PC-3 (cell line): ENCODE measurements at regions of chr13 and their contacts with region 1.

Region 1: GRCh38 chr13:33931397-33932311 is 113.7 kb downstream of the RFC3 start:
- DNase-seq: peak; percentile 75
- ATAC-seq: peak; percentile 95
- H3K4me3 ChIP-seq: no peak overlapping the region
- H3K27ac ChIP-seq: no peak overlapping the region
- H3K4me1 ChIP-seq: no peaks in the 10 kb centered on the region
- H3K27me3 ChIP-seq: no peaks in the 10 kb centered on the region
- CTCF ChIP-seq: peak; percentile 85

Region 2: GRCh38 chr13:33999811-34000605 is 68.4 kb after region 1 on chr13:
- CTCF ChIA-PET with region 1: no interaction called
- POLR2A ChIA-PET with region 1: no interaction called
- intact Hi-C with region 1: loop called (anchors 5 kb)
- DNase-seq: peak; percentile 77
- ATAC-seq: peak; percentile 76
- H3K4me3 ChIP-seq: no peak overlapping the region
- H3K27ac ChIP-seq: peak overlapping the region; percentile 72
- H3K4me1 ChIP-seq: peaks cover 46% of the 10 kb centered on the region
- H3K27me3 ChIP-seq: no peaks in the 10 kb centered on the region
- CTCF ChIP-seq: no peak

Region 3: GRCh38 chr13:34086281-34086680 is 154.6 kb after region 1 on chr13:
- CTCF ChIA-PET with region 1: no interaction called
- POLR2A ChIA-PET with region 1: no interaction called
- intact Hi-C with region 1: no loop called
- DNase-seq: no peak
- ATAC-seq: no peak
- H3K4me3 ChIP-seq: no peak overlapping the region
- H3K27ac ChIP-seq: no peak overlapping the region
- H3K4me1 ChIP-seq: no peaks in the 10 kb centered on the region
- H3K27me3 ChIP-seq: no peaks in the 10 kb centered on the region
- CTCF ChIP-seq: no peak

Region 4: GRCh38 chr13:35164324-35164932 is 1232.8 kb after region 1 on chr13:
- CTCF ChIA-PET with region 1: interaction called, 3 read pairs
- POLR2A ChIA-PET with region 1: no interaction called
- intact Hi-C with region 1: loop called (anchors 1 kb)
- DNase-seq: peak; percentile 63
- ATAC-seq: peak; percentile 42; the same call in 1 of the 2 replicates
- H3K4me3 ChIP-seq: no peak overlapping the region
- H3K27ac ChIP-seq: no peak overlapping the region
- H3K4me1 ChIP-seq: no peaks in the 10 kb centered on the region
- H3K27me3 ChIP-seq: no peaks in the 10 kb centered on the region
- CTCF ChIP-seq: peak; percentile 77